Activated CD8-positive, alpha-beta T cell treated with anti-CD3 and anti-CD28 coated beads, Interleukin-2, amount 10 ng/mL, durations not matched to agents 7 days and 5 days (primary cell): ENCODE measurements at regions of chr7 and their contacts with region 1.

Region 1: DNA sequence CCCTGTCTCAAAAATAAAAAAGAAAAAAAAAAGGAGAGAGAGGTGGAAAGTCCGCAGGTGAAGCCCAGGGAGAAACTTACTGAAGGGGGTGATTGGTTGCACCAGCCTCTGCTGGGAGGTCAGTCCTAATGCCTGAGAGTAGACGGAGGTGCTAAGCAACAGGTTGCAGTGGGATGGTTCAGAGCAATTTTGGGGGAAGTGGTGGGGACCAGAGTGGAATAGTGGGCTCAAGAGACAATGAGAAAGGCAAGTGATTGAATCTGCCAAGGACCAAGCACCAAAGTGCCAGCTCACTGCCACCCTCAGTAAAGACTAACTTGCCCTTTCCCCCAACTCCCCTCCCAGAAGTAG is 90.2 kb upstream of the GTF2I start:
- DNase-seq: no peak
- ATAC-seq: no peak
- H3K4me3 Mint-ChIP-seq: no peak overlapping the region
- H3K27ac Mint-ChIP-seq: no peak overlapping the region
- H3K4me1 Mint-ChIP-seq: no peaks in the 10 kb centered on the region
- H3K27me3 Mint-ChIP-seq: no peaks in the 10 kb centered on the region

Region 2: GRCh38 chr7:74417419-74417971 is 149.8 kb before region 1 on chr7:
- CTCF ChIA-PET with region 1: interaction called, 39 read pairs
- POLR2A ChIA-PET with region 1: no interaction called
- DNase-seq: peak; percentile 61
- ATAC-seq: peak; percentile 76
- H3K4me3 Mint-ChIP-seq: no peak overlapping the region
- H3K27ac Mint-ChIP-seq: no peak overlapping the region
- H3K4me1 Mint-ChIP-seq: no peaks in the 10 kb centered on the region
- H3K27me3 Mint-ChIP-seq: no peaks in the 10 kb centered on the region

Region 3: DNA sequence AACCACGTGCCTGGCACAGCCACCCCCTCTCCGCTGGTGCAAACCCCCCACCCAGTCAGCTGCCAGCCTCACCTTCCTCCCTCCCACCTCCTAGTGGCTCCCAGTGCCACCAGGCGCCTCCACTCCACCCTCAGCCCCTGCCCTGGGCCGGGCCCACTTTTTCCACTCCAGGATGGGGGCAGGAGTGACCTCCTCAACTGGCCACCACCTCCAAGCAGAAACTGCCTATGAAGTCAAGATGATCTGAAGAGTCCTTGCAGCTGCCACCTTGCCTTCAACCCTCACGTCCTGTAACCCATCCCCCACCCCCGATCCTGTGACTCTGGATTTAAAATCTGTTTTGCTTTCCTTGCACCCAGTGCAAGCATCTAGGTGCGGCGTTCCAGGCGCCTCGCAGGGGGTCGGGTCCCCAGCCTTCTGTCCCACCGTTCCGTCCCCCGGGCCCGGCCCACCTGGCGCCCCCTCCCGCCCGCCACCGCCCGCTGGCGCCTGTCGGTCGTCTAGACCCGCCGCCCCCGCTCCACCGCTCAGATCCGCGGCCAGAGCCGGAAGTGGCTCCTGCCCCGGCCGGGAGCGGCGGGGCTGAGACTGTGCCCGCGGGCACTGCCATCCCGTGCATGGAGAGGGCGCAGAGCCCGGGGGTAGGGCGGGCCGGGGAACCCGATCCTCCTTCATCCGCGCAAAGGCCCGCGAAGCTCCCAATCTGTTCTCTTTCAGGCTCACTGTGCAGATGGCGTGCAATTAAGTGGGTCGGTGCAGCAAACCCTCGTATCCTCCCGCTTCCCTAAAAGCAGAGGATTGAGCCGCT is 39.0 kb after region 1 on chr7:
- CTCF ChIA-PET with region 1: no interaction called
- POLR2A ChIA-PET with region 1: no interaction called
- DNase-seq: peak; percentile 44
- ATAC-seq: peak; percentile 88
- H3K4me3 Mint-ChIP-seq: peak overlapping the region; percentile 38
- H3K27ac Mint-ChIP-seq: no peak overlapping the region
- H3K4me1 Mint-ChIP-seq: peaks cover 14% of the 10 kb centered on the region
- H3K27me3 Mint-ChIP-seq: peaks cover 7% of the 10 kb centered on the region